Posterior cingulate gyrus (tissue), 11 donors: ENCODE measurements at regions of chr6 and their contacts with region 1.

Region 1: GRCh38 chr6:98845211-98846020 is 11.0 kb downstream of the POU3F2 start:
- DNase-seq: peak; percentile 85 to 98 (median 92)

Region 2: GRCh38 chr6:97524811-97525210 is 1320.6 kb before region 1 on chr6:
- intact Hi-C with region 1: loop called (anchors 10 kb)
- DNase-seq: peak in 4 of 10 donors; percentile 17 to 76 (median 25)

Region 3: DNA sequence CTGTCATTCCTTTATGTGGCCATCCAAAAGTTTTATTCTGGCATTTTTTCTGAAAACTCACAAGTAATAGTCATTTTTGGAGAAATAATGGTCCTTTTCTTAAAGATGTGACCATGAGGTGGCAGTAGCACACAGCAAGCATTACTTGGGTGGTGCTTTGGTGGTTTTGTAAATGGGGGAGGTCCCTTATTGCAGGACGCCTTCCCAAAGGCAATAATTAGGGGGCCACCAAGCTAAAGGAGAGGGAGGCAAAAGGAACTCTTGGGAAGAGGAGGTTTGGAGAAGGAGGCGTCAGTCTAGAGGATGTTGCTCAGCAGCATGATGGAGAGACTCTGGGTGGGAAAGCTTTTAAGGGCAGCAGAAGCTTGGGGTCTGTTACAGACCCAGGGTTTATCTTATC is 1139.8 kb before region 1 on chr6:
- intact Hi-C with region 1: loop called (anchors 2 kb)
- DNase-seq: peak in 1 of 10 donors; percentile 13

Region 4: DNA sequence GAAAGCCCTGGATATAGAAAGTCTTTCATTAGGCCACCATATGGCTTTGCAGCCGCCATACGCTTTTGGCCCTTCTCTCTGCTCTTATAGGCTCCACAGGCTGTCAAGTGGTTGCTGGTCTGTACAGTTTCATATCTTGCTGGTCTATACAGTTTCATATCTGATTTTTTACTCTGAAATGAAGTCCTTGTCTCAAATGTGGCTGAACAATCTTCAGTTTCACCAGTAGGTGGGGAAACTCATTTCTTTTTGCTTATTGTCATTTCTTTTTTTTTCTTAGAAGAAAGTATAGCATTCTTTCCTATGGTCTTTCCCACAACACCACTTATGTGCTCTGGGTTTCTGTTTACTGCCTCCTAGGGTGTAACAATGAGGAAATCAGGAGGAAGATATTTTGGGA is 791.0 kb before region 1 on chr6:
- intact Hi-C with region 1: loop called (anchors 5 kb)
- DNase-seq: no peak

Region 5: DNA sequence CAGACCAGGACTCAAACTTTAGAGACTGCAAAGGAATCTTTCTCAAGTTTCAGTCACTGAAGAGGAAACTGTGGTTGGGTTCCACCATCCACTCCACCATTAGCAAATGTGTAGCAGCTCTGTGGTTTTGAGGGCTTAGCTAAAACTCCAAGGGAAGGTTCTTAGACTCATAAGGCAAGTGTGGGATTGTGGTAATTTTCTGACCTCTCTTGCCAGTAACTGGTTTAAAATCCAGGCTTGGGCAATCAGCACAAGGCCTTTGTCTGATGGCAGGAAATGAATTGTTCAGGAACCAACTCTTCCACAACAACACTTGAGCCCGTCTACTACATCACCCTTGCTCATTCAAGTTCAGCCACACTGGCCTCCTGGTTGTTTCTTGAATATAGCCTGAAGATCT is 170.9 kb after region 1 on chr6:
- intact Hi-C with region 1: no loop called
- DNase-seq: no peak

Region 6: DNA sequence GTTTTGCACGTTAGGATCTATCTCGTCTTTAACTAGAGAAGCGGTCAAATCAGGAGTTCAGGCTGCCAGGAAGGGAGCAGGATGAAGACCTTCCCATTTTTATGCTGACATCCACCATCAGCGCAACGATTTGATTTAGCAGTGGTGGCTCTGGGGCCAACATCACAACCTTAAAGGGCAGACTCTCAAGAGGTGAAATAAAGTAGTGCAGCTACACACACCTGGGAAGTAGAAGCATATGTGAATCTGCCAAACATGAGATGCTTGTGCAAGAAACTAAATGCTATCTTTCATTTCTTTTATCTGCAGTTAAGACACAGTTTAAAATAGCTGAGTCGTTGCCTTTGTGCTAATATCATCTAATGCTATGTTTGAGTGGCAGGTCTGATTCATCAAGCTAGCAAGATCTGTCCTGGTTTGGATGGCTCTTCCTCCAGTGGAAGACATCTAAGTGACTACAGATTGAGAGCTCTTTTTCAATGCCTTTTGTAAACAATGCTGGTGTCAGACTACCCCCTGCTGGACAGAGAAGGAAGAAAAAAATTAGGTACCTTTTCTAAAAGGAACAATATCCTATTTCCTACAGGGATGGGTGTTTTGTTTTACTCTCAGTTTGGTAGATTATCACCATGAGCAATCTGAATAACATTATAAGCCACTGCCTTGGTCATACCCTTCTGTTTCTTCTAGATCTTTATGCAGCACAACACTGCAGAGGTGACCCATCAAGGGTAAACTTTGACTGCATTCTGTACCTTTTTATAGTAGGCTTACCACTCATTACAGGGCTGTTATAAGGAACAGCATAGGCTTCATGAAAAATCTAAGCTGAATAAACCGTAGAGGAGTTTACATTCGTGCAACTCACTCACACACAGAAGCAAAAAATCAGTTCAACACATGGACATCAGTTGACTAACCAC is 274.0 kb after region 1 on chr6:
- intact Hi-C with region 1: loop called (anchors 5 kb)
- DNase-seq: peak in 2 of 10 donors; percentile 14 to 27